RWPE1 (cell line): ENCODE measurements at regions of chr1 and their contacts with region 1.

Region 1: DNA sequence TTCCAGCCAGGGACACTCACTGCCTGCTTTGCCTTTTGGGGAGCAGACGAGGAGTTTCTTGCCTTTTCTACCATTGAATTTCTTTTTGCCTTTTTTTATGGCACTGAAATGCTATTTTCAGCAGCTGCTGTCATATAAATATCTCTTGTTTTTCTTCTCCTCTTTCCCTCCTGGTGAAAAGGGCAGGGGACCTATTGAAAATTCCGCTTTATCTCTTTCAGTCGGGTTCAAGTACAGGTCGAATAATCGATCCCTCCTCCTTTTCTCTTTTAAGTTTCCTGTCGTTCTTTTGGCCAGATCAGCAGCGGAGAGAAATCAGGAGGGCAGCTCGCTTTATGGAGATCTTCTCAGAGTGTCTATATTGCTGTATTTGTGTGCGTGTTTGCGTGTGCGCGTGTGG is 67.4 kb upstream of the CASZ1 start:
- DNase-seq: no peak
- H3K27ac ChIP-seq: no peak overlapping the region
- CTCF ChIP-seq: no peak

Region 2: DNA sequence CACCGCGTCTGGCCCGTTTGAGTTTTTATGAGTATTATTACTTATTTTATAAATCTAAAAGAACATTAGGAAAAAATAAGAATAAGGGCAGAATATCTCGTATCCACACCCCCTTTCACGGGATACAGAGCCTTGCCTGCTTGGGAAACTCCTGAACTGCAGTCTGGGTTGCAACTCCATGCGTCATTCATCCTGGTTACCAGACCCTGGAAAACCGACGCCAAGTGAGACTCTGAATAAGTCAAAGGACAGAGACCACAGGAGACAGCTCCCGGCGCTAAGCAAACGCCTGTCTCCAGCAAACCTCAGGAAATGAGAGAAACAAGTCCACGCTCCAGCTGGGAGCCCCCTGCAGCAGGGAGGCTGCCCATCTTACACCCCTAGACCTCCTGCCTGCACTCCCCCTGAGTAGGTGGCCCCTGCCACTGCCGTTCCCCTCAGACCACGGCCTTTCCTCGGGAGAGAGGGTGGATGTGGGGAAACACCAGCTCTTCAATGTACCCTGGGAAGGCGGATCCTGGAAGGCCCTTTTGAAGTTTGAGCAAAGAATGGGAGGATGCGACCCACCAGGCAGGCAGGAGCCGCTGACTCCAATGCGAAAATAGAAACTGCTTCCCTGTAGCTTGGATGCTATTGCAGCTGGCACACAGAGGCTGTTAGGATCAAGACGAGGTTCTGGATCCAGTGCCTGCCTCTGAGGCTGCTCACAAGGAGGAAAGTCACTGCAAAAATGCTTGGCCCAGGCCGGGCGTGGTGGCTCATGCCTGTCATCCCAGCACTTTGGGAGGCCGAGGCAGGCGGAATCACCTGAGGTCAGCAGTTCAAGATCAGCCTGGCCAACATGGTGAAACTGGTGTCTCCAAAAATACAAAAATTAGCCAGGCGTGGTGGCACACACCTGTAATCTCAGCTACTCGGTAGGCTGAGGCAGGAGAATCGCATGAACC is 1697.3 kb before region 1 on chr1:
- CTCF ChIA-PET with region 1: no interaction called
- POLR2A ChIA-PET with region 1: no interaction called
- DNase-seq: no peak
- H3K27ac ChIP-seq: no peak overlapping the region
- CTCF ChIP-seq: no peak

Region 3: GRCh38 chr1:9845914-9846313 is 1018.0 kb before region 1 on chr1:
- CTCF ChIA-PET with region 1: interaction called, 10 read pairs
- POLR2A ChIA-PET with region 1: no interaction called
- DNase-seq: no peak
- H3K27ac ChIP-seq: peak overlapping the region; percentile 99
- CTCF ChIP-seq: no peak

Region 4: GRCh38 chr1:10467051-10467450 is 396.8 kb before region 1 on chr1:
- CTCF ChIA-PET with region 1: no interaction called
- POLR2A ChIA-PET with region 1: no interaction called
- DNase-seq: no peak
- H3K27ac ChIP-seq: no peak overlapping the region
- CTCF ChIP-seq: no peak